HEK293 (cell line): ENCODE measurements at regions of chr19 and their contacts with region 1.

Region 1: DNA sequence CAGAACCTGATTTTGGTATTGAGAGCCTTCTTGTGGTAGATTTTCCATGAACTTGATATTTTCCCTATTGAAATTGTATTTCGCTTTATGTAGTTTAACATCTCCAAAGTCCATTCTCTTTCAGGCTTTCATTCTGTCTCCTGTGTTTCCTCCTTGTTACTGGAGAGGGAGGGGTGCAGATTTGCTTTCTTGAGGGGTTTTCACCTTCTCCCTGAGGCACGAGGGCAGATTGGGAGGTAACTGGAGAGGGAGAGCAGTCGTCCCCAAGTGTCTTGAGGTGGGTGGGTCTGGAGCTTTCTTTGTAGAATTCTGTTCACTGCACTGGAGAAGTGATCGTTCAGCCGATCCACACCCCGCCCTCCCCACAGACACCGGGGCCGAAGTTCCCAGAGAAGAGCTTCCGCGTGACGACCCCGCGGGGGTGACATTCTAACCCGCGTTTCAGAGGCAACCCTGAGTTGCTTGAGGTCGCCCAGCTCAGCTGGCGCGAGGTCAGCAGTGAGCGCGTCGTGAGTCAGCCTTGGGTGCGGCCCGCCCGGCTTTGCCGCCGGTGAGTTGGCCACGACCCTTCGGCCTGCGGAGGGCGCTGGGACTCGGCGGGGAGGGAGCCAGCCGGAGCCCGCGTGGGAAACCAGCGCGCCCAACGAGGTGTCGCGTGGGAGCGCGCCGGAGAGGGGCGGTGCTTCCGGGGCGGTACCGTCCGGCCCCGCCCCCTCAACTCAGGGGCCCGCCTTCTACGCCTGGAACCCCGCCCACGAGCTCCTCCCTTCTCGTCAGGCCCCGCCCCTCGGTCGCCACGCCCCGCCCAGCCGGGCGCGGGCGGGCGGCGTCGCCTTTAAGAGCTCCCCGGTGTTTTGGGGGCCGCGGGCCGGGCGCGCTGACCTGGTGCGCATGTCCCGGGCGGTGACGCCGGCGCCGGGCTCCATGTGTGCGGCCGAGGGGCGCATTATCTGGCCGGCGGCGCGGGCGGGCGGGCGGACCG is at the start of gene GATAD2A:
- H3K4me3 ChIP-seq: peak within 1 kb of the TSS; percentile 78
- H3K27ac ChIP-seq: peak within 1 kb of the TSS; percentile 72
- H3K4me1 ChIP-seq: peaks cover 25% of the 10 kb centered on the region
- CTCF ChIP-seq: peak; percentile 59; the same call in 1 of the 2 replicates

Region 2: DNA sequence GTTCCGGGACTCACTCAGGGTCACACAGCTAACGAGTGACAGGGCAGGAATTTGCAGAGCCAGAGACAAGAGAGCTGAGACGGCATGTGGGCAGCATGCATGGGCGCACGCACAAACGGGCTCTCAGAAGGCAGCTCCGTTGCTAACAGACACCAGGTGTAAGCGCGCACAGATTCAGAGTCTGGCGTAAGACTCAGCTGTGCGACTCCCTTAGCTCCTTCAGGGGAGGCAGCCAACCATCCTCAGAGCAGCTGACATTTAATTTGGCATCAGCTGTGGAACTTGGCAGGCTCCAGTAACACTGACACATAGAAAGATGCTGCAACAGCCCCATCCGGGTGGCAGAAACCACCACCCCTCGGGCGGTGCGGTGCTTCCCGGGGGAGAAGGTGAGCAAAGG is 124.6 kb before region 1 on chr19:
- CTCF ChIA-PET with region 1: no interaction called
- POLR2A ChIA-PET with region 1: no interaction called
- H3K4me3 ChIP-seq: no peak overlapping the region
- H3K27ac ChIP-seq: no peak overlapping the region
- H3K4me1 ChIP-seq: no peaks in the 10 kb centered on the region
- CTCF ChIP-seq: no peak

Region 3: DNA sequence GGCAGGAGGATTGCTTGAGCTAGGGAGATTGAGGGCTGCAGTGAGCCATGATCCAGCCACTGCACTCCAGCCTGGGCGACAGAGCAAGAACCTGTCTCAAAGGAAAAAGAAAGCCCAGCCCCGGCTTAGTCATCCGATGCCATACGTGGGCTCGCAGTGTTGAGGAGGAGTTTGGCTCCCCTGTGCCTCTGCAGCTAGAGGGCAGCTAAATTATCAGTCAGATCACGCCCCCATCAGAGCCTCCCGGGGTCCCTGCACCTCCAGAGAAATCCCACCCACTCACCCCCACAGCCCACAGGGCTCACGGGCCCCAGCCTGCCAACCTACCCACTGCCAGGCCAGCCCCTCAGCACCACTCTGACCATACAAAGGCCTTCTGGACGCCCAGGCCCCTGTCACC is 56.9 kb before region 1 on chr19:
- CTCF ChIA-PET with region 1: no interaction called
- POLR2A ChIA-PET with region 1: no interaction called
- H3K4me3 ChIP-seq: no peak overlapping the region
- H3K27ac ChIP-seq: no peak overlapping the region
- H3K4me1 ChIP-seq: no peaks in the 10 kb centered on the region
- CTCF ChIP-seq: no peak

Region 4: GRCh38 chr19:19361075-19361594 is 44.0 kb before region 1 on chr19:
- CTCF ChIA-PET with region 1: interaction called, 10 read pairs
- POLR2A ChIA-PET with region 1: interaction called, 14 read pairs
- H3K4me3 ChIP-seq: no peak overlapping the region
- H3K27ac ChIP-seq: no peak overlapping the region
- H3K4me1 ChIP-seq: no peaks in the 10 kb centered on the region; the same call in none of the 2 replicates
- CTCF ChIP-seq: peak; percentile 74; the same call in 1 of the 2 replicates

Region 5: GRCh38 chr19:19366612-19367396 is 38.4 kb before region 1 on chr19:
- CTCF ChIA-PET with region 1: interaction called, 10 read pairs
- POLR2A ChIA-PET with region 1: interaction called, 14 read pairs
- H3K4me3 ChIP-seq: peak overlapping the region; percentile 14
- H3K27ac ChIP-seq: peak overlapping the region; percentile 34; the same call in 1 of the 2 replicates
- H3K4me1 ChIP-seq: peaks cover 2% of the 10 kb centered on the region; the same call in 1 of the 2 replicates
- CTCF ChIP-seq: peak; percentile 88

Region 6: GRCh38 chr19:19385108-19385899 is 19.9 kb before region 1 on chr19:
- CTCF ChIA-PET with region 1: interaction called, 4 read pairs
- POLR2A ChIA-PET with region 1: interaction called, 31 read pairs
- H3K4me3 ChIP-seq: peak overlapping the region; percentile 89
- H3K27ac ChIP-seq: peak overlapping the region; percentile 90
- H3K4me1 ChIP-seq: peaks cover 5% of the 10 kb centered on the region
- CTCF ChIP-seq: no peak